BJ (cell line): ENCODE measurements at regions of chr17 and their contacts with region 1.

Region 1: GRCh38 chr17:29640413-29640812 is 17.7 kb upstream of the CORO6 start:
- DNase-seq: peak; percentile 52
- H3K4me3 ChIP-seq: no peak overlapping the region
- H3K27me3 ChIP-seq: no peaks in the 10 kb centered on the region
- CTCF ChIP-seq: no peak

Region 2: DNA sequence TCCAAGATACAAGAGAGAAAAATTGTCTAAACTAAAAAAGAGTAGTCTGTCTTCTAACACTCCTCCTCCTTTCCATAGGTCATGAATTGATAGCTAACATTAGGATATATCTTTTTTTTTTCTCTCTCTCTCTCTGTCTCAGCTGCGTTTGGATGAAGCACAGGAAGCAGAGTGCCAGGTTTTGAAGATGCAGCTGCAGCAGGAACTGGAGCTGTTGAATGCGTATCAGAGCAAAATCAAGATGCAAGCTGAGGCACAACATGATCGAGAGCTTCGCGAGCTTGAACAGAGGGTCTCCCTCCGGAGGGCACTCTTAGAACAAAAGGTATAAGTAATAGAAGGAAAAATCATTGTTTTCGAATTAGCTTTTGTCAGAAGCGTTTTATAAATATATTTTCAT is 106.4 kb before region 1 on chr17:
- CTCF ChIA-PET with region 1: no interaction called
- POLR2A ChIA-PET with region 1: no interaction called
- DNase-seq: no peak
- H3K4me3 ChIP-seq: no peak overlapping the region
- H3K27me3 ChIP-seq: no peaks in the 10 kb centered on the region
- CTCF ChIP-seq: no peak

Region 3: DNA sequence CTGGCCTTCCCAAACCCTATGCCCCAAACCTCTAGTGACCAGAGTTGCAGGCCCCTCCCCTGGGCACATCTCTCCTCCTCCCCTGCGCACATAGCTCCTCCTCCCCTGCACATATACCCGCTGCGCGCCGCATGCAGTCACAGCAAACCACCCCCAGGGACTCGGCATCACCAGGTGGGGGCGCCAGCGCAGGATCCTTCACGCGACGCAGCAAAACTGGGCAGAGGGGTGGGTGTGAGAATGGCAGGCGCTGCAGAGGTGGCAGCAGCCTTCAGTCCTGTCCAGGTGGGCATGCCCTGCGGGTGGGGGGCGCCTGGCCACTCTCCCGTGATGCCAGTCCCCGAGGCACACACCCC is 23.3 kb before region 1 on chr17:
- CTCF ChIA-PET with region 1: interaction called, 12 read pairs
- POLR2A ChIA-PET with region 1: no interaction called
- DNase-seq: no peak
- H3K4me3 ChIP-seq: no peak overlapping the region
- H3K27me3 ChIP-seq: no peaks in the 10 kb centered on the region
- CTCF ChIP-seq: peak; percentile 68

Region 4: GRCh38 chr17:29728490-29728889 is 88.1 kb after region 1 on chr17:
- CTCF ChIA-PET with region 1: no interaction called
- POLR2A ChIA-PET with region 1: no interaction called
- DNase-seq: no peak
- H3K4me3 ChIP-seq: no peak overlapping the region
- H3K27me3 ChIP-seq: no peaks in the 10 kb centered on the region
- CTCF ChIP-seq: no peak

Region 5: DNA sequence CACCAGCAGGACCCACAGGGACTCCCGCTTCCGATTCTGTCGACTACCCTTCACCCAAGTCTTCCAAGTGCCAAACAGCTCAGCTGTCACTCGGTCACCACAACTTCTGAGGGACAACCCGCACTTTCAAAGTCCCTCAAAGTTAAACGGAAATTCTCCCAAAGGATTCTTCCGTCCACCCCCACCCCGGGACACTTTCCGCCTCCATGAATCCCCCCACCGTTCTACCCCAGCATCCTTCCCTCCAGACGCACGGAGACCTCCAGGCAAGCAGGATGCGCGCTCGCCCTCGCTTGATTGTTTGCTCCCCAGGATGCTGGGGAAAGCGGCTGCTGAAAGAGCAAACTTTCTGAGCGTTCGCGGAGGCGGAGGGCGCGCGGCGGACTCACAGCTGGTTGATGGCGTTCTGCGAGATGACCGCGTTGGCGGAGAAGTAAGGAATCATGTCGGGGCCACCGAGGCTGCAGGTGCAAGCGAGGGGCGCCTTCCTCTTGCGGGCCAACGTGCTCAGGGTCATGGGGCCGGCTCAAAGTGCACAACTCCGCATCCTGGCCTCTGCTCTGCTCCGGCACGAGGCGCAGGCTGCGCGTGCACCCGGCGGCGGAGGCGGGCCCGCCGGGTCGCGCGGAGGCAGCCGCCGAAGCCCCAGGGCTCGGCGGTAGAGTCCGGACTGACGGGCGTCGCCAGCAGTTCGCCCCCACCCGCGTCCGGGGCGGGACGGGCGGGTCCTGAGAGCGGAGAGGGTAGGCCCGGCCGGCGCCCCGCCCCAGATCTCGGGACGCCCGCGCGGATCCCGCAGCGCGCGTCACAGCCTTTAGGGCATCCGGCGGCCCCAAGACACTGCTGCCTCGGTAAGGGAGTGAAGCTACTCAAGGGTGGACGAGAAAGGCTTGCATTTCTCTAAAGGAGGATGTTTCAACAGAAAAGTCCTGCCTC is 120.6 kb after region 1 on chr17:
- CTCF ChIA-PET with region 1: interaction called, 14 read pairs
- POLR2A ChIA-PET with region 1: no interaction called
- DNase-seq: peak; percentile 39
- H3K4me3 ChIP-seq: peak overlapping the region; percentile 70
- H3K27me3 ChIP-seq: no peaks in the 10 kb centered on the region
- CTCF ChIP-seq: no peak

Region 6: GRCh38 chr17:29789196-29790170 is 149.1 kb after region 1 on chr17:
- CTCF ChIA-PET with region 1: interaction called, 30 read pairs
- POLR2A ChIA-PET with region 1: no interaction called
- DNase-seq: no peak
- H3K4me3 ChIP-seq: no peak overlapping the region
- H3K27me3 ChIP-seq: no peaks in the 10 kb centered on the region
- CTCF ChIP-seq: no peak